K562 (cell line): ENCODE measurements at regions of chr12 and their contacts with region 1.

Region 1: GRCh38 chr12:24948757-24949722 is at the start of gene BCAT1:
- DNase-seq: peak; percentile 75 to 92 (median 81)
- ATAC-seq: peak; percentile 79
- H3K4me3 ChIP-seq: peak within 1 kb of the TSS; percentile 69
- H3K27ac ChIP-seq: peak within 1 kb of the TSS; percentile 90
- H3K4me1 ChIP-seq: peaks cover 37 to 49% of the 10 kb centered on the region in 2 experiments
- H3K27me3 ChIP-seq: no peaks in the 10 kb centered on the region
- CTCF ChIP-seq: peak in 2 of 3 experiments; percentile 6 to 58; a peak in 3 of 6 replicates
- EP300 ChIP-seq: peak; percentile 63
- POLR2A ChIP-seq: peak; percentile 92
- RAD21 ChIP-seq: peak in 1 of 2 experiments; percentile 31; a peak in 2 of 4 replicates
- polyA plus RNA-seq, gene BCAT1: 38.5 to 45.4 TPM

Region 2: DNA sequence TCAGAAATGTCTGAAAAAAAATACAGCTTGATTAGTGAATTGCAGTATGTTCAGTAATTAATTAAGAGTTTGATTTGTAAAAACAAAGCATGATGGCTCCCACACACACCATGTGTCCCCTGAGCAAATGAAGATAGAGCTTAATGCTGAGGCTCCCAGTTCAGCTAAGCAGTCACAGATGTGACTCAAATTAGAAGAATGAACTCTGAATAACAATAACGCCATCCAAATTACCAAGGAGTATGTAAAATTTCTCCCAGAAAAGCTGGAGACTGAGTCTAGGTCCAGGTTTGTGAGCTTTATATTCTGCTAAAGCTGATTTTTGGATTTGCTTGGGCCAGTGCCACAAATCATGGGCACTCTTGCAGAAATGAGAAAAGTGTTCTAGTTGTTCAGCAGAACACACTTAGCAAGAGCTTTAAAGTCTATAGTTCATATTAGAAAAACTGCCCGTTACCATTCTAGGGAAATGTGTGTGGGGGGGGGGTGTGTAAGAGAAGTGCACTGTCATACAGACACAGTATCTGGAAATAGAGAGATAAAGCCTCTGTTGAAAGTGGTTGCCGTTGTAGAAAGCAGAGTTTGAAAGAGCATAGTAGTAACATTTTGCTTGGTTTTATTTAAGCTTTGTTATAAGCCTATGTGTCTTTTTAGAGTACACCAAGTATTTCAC is 253.2 kb before region 1 on chr12:
- CTCF ChIA-PET with region 1: no interaction called
- POLR2A ChIA-PET with region 1: no interaction called
- in situ Hi-C with region 1: no loop called
- intact Hi-C with region 1: loop called (anchors 10 kb)
- DNase-seq: peak; percentile 63 to 79 (median 69)
- ATAC-seq: peak; percentile 91
- H3K4me3 ChIP-seq: no peak overlapping the region
- H3K27ac ChIP-seq: peak overlapping the region; percentile 90
- H3K4me1 ChIP-seq: peaks cover 0 to 29% of the 10 kb centered on the region in 2 experiments; a peak in 3 of 5 replicates
- H3K27me3 ChIP-seq: no peaks in the 10 kb centered on the region
- CTCF ChIP-seq: no peak
- EP300 ChIP-seq: peak; percentile 89
- POLR2A ChIP-seq: no peak; the same call in 1 of the 2 replicates
- RAD21 ChIP-seq: no peak

Region 3: DNA sequence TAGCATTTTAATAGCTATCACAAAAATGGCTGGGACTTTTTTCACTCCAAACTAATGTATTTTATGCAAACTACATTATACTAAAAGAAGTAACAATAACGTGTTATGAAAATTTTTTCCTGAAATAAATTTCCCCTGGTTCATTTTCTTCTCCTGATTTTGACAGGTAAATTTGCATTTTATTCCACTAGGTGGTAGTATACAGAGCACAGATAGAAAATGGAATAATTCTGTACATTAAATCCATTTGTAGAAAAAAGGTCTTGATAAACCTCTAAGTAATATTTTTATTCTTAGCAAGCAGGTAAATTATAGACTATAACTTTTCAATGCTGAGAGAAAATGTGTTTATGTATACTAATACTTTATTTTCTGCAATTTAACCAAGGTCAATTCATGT is 96.6 kb before region 1 on chr12:
- CTCF ChIA-PET with region 1: no interaction called
- POLR2A ChIA-PET with region 1: interaction called, 3 read pairs
- in situ Hi-C with region 1: no loop called
- intact Hi-C with region 1: loop called (anchors 5 kb)
- DNase-seq: no peak
- ATAC-seq: no peak
- H3K4me3 ChIP-seq: no peak overlapping the region
- H3K27ac ChIP-seq: no peak overlapping the region
- H3K4me1 ChIP-seq: peaks cover 0 to 5% of the 10 kb centered on the region in 2 experiments; a peak in 2 of 5 replicates
- H3K27me3 ChIP-seq: no peaks in the 10 kb centered on the region
- CTCF ChIP-seq: peak in 1 of 3 experiments; percentile 43; a peak in 2 of 6 replicates
- EP300 ChIP-seq: no peak
- POLR2A ChIP-seq: no peak
- RAD21 ChIP-seq: no peak; a peak in 1 of 4 replicates

Region 4: GRCh38 chr12:24937553-24938244 is 11.3 kb before region 1 on chr12:
- CTCF ChIA-PET with region 1: no interaction called
- POLR2A ChIA-PET with region 1: interaction called, 19 read pairs
- in situ Hi-C with region 1: no loop called
- intact Hi-C with region 1: no loop called
- DNase-seq: peak in 1 of 4 experiments; percentile 54
- ATAC-seq: peak; percentile 28
- H3K4me3 ChIP-seq: no peak overlapping the region
- H3K27ac ChIP-seq: no peak overlapping the region
- H3K4me1 ChIP-seq: peaks cover 4 to 57% of the 10 kb centered on the region in 2 experiments
- H3K27me3 ChIP-seq: no peaks in the 10 kb centered on the region
- CTCF ChIP-seq: no peak
- EP300 ChIP-seq: no peak
- POLR2A ChIP-seq: peak; percentile 35; the same call in 1 of the 2 replicates
- RAD21 ChIP-seq: no peak